Aorta (tissue), 5 donors: ENCODE measurements at regions of chr16 and their contacts with region 1.

Region 1: DNA sequence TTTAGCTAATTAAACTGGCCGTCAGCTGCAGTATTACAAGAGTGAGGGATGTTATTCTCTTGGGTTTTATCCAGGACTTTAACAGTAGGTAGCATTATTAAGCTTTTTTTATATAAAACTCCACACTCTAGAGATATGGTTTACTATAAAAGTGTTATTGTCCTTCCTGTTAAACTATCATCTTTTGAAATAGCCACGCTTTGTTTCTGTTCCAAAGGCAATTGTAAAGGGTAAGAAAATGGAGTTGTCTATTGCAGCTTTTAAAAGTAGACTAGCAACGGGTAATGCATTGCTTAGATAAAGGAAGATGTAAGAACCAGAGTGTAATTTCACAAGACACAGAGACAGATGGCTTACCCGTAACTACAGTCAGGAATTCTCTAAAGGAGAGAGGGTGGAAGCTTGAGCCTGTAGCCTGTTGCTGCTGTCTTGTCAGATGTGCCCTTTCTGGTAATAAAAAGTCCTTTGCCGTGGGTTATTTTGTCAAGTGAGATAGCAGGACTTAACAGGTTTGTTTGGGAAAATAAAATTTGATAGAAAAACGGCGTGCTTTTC is 56.4 kb downstream of the WWOX start:
- DNase-seq: no peak
- ATAC-seq: no peak
- H3K4me3 ChIP-seq: no peak overlapping the region
- H3K27ac ChIP-seq: no peak overlapping the region
- H3K4me1 ChIP-seq: no peaks in the 10 kb centered on the region
- H3K27me3 ChIP-seq: no peaks in the 10 kb centered on the region

Region 2: DNA sequence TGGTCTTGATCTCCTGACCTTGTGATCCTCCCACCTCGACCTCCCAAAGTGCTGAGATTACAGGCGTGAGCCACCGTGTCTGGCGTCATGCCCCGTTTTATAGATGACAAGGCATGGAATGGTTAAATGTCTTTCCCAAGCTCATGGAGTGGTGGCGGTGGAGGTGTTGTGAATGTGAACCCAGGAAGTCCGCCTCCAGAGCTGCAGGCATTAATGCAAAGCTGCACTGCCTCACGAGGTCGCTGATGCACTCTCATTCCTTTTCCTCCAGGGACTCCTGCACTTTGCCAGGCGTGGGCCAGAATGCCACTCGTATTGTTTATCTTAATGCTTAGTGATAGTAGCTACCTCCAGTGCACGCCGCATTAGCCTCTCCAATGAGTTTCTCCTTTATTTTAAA is 93.2 kb after region 1 on chr16:
- intact Hi-C with region 1: no loop called
- DNase-seq: no peak
- ATAC-seq: no peak
- H3K4me3 ChIP-seq: no peak overlapping the region
- H3K27ac ChIP-seq: no peak overlapping the region
- H3K4me1 ChIP-seq: no peaks in the 10 kb centered on the region
- H3K27me3 ChIP-seq: no peaks in the 10 kb centered on the region

Region 3: DNA sequence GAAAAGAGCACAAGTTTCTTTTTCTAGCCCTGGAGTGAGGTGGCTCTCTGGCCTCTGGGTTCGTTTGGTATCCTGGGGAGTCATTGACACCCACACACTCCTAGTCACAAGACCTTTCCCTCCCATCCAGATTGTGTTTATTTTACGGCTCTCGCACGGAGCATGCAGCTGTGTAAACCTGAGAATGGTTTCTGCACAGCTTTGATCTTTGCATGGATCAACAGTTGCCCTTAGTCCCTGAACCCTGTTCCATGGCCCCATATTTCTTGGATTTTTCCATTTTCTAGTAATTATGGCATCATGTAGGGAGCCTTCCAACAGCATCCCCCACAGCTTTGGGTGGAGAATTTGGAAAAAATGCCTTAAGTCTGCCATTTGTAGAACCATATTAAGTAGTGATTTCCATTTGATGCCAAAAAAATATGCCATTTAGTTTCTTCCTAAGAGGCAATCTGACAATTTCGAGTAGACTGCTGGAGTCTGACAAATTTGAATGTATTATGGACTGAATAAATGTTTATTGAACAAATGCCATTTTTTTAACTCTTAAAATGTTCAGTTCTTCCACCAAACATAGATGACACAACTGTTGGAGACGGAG is 141.3 kb after region 1 on chr16:
- intact Hi-C with region 1: no loop called
- DNase-seq: no peak
- ATAC-seq: no peak
- H3K4me3 ChIP-seq: no peak overlapping the region
- H3K27ac ChIP-seq: no peak overlapping the region
- H3K4me1 ChIP-seq: peaks cover 0 to 3% of the 10 kb centered on the region in 2 donors
- H3K27me3 ChIP-seq: no peaks in the 10 kb centered on the region

Region 4: GRCh38 chr16:79229361-79229760 is 1073.5 kb after region 1 on chr16:
- intact Hi-C with region 1: loop called in 1 of 2 experiments (anchors 10 kb)
- DNase-seq: no peak
- ATAC-seq: no peak
- H3K4me3 ChIP-seq: no peak overlapping the region
- H3K27ac ChIP-seq: no peak overlapping the region
- H3K4me1 ChIP-seq: no peaks in the 10 kb centered on the region
- H3K27me3 ChIP-seq: no peaks in the 10 kb centered on the region